CD14-positive monocyte (primary cell): ENCODE measurements at regions of chr9 and their contacts with region 1.

Region 1: DNA sequence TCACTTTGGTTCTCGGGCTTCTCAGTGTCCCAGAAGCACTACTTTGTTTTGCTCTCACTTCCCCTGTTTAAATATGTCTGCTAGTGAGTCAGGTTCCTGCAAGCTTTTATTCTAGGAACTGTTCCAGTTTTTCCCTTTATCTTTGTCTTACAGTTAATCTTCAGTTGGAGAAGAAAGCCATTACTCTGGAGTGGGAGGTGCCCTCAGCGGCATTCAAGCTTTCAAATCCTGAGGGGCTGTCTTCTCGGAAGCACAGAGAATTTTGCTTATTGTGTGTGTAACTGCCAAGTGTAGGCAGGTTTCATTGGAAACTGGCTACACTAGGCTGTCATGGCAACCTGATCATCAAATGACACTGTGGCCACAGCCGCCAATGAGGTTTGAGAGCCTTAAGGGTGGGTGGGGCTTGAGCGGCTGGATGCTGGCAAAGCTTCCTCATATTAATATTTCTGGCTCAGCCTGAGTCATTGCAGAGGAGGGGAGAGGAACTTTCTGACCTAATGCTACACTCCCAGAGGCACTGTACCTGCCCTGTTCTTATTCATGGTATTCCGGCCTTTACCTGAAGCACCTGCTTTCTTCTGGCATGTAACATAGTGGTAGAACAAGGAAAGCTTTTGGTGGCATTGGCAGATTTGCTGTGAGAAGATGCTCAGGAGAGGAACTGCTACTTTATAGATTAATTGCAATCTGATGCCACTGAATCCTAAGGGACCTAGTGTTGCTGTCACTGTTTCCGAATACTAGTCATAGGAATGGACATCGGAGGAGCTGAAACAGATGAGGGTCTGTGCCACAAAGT is 26.3 kb downstream of the SLC25A25 start:
- DNase-seq: peak; percentile 91 to 97 (median 96)
- H3K4me3 ChIP-seq: peak overlapping the region in 1 of 3 experiments; percentile 46
- H3K4me3 Mint-ChIP-seq: peak overlapping the region; percentile 69 to 78
- H3K27ac ChIP-seq: peak overlapping the region; percentile 93 to 97
- H3K27ac Mint-ChIP-seq: peak overlapping the region; percentile 97 to 100 (median 100)
- H3K4me1 ChIP-seq: peaks cover 68 to 78% of the 10 kb centered on the region in 2 donors
- H3K4me1 Mint-ChIP-seq: peaks cover 77% of the 10 kb centered on the region
- H3K27me3 ChIP-seq: no peaks in the 10 kb centered on the region
- H3K27me3 Mint-ChIP-seq: no peaks in the 10 kb centered on the region
- CTCF ChIP-seq: no peak

Region 2: GRCh38 chr9:128053560-128053959 is 40.8 kb before region 1 on chr9:
- intact Hi-C with region 1: loop called in 1 of 2 experiments (anchors 5 kb)
- DNase-seq: peak; percentile 95 to 98 (median 97)
- H3K4me3 ChIP-seq: peak overlapping the region in 1 of 3 experiments; percentile 50
- H3K4me3 Mint-ChIP-seq: peak overlapping the region in 1 of 2 donors; percentile 49
- H3K27ac ChIP-seq: peak overlapping the region; percentile 80 to 92
- H3K27ac Mint-ChIP-seq: peak overlapping the region; percentile 95 to 98 (median 97)
- H3K4me1 ChIP-seq: peaks cover 69 to 83% of the 10 kb centered on the region in 2 donors
- H3K4me1 Mint-ChIP-seq: peaks cover 80% of the 10 kb centered on the region
- H3K27me3 ChIP-seq: no peaks in the 10 kb centered on the region
- H3K27me3 Mint-ChIP-seq: peaks cover 0 to 5% (median 0%) of the 10 kb centered on the region in 3 donors
- CTCF ChIP-seq: no peak

Region 3: GRCh38 chr9:128072144-128073021 is 22.0 kb before region 1 on chr9:
- intact Hi-C with region 1: loop called in 1 of 2 experiments (anchors 2 kb)
- DNase-seq: peak; percentile 86 to 96 (median 94)
- H3K4me3 ChIP-seq: peak overlapping the region in 2 of 3 experiments; percentile 20 to 64
- H3K4me3 Mint-ChIP-seq: peak overlapping the region; percentile 65 to 82
- H3K27ac ChIP-seq: peak overlapping the region; percentile 75 to 88
- H3K27ac Mint-ChIP-seq: peak overlapping the region; percentile 96 to 98 (median 97)
- H3K4me1 ChIP-seq: peaks cover 56 to 64% of the 10 kb centered on the region in 2 donors
- H3K4me1 Mint-ChIP-seq: peaks cover 57% of the 10 kb centered on the region
- H3K27me3 ChIP-seq: no peaks in the 10 kb centered on the region
- H3K27me3 Mint-ChIP-seq: peaks cover 0 to 6% (median 0%) of the 10 kb centered on the region in 3 donors
- CTCF ChIP-seq: no peak